Caco-2 (cell line): ENCODE measurements at regions of chr2 and their contacts with region 1.

Region 1: GRCh38 chr2:237026981-237027711 is 58.5 kb upstream of the COPS8 start:
- DNase-seq: peak; percentile 65 to 69
- H3K4me3 ChIP-seq: no peak overlapping the region
- H3K4me3 Mint-ChIP-seq: no peak overlapping the region
- H3K27ac Mint-ChIP-seq: no peak overlapping the region
- H3K4me1 ChIP-seq: peaks cover 19% of the 10 kb centered on the region
- H3K4me1 Mint-ChIP-seq: no peaks in the 10 kb centered on the region
- H3K27me3 ChIP-seq: no peaks in the 10 kb centered on the region
- H3K27me3 Mint-ChIP-seq: no peaks in the 10 kb centered on the region
- CTCF ChIP-seq: peak; percentile 71 to 75

Region 2: GRCh38 chr2:236569573-236569973 is 457.6 kb before region 1 on chr2 and contains the start of gene ACKR3:
- CTCF ChIA-PET with region 1: interaction called, 3 read pairs
- POLR2A ChIA-PET with region 1: no interaction called
- intact Hi-C with region 1: loop called (anchors 5 kb)
- DNase-seq: peak; percentile 66 to 67
- H3K4me3 ChIP-seq: peak within 1 kb of the TSS; percentile 40
- H3K4me3 Mint-ChIP-seq: peak within 1 kb of the TSS; percentile 75
- H3K27ac Mint-ChIP-seq: no peak within 1 kb of the TSS
- H3K4me1 ChIP-seq: peaks cover 20% of the 10 kb centered on the region; the same call in 1 of the 2 replicates
- H3K4me1 Mint-ChIP-seq: no peaks in the 10 kb centered on the region
- H3K27me3 ChIP-seq: no peaks in the 10 kb centered on the region
- H3K27me3 Mint-ChIP-seq: no peaks in the 10 kb centered on the region
- CTCF ChIP-seq: peak in 1 of 2 experiments; percentile 47
- total RNA-seq, gene ACKR3: 3.2 and 3.9 TPM in 2 replicates

Region 3: DNA sequence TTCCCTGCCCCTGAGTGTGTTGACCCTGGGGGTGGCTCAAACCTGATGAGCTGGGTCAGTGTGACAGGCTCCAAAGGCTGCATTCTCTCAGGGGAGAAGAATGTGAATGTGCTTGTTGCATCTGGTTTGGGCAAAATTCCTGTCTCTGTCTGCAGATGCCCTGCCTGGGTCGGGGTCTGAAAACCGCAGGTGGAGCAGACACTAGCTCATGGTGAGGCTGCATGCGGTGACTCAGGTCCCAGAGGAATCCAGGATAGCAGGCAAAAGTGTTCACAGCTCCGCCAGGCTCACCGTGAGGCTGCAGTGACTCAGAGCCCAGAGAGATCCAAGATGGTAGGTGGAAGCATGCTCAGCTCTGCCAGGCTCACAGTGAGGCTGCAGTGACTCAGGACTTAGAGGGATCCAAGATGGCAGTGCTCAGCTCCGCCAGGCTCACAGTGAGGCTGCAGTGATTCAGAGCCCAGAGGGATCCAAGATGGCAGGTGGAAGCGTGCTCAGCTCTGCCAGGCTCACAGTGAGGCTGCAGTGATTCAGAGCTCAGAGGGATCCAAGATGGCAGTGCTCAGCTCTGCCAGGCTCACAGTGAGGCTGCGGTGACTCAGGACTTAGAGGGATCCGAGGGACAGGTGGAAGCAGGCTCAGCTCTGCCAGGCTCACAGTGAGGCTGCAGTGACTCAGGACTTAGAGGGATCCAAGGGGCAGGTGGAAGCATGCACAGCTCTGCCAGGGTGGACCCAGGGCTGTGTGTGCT is 257.1 kb before region 1 on chr2:
- CTCF ChIA-PET with region 1: no interaction called
- POLR2A ChIA-PET with region 1: no interaction called
- intact Hi-C with region 1: loop called (anchors 5 kb)
- DNase-seq: peak; percentile 25 to 43
- H3K4me3 ChIP-seq: no peak overlapping the region
- H3K4me3 Mint-ChIP-seq: peak overlapping the region; percentile 9
- H3K27ac Mint-ChIP-seq: peak overlapping the region; percentile 56
- H3K4me1 ChIP-seq: no peaks in the 10 kb centered on the region
- H3K4me1 Mint-ChIP-seq: peaks cover 6% of the 10 kb centered on the region
- H3K27me3 ChIP-seq: no peaks in the 10 kb centered on the region
- H3K27me3 Mint-ChIP-seq: no peaks in the 10 kb centered on the region
- CTCF ChIP-seq: no peak

Region 4: GRCh38 chr2:236899950-236900640 is 127.1 kb before region 1 on chr2:
- CTCF ChIA-PET with region 1: no interaction called
- POLR2A ChIA-PET with region 1: no interaction called
- intact Hi-C with region 1: loop called (anchors 5 kb)
- DNase-seq: no peak
- H3K4me3 ChIP-seq: no peak overlapping the region
- H3K4me3 Mint-ChIP-seq: no peak overlapping the region
- H3K27ac Mint-ChIP-seq: no peak overlapping the region
- H3K4me1 ChIP-seq: no peaks in the 10 kb centered on the region
- H3K4me1 Mint-ChIP-seq: peaks cover 5% of the 10 kb centered on the region
- H3K27me3 ChIP-seq: no peaks in the 10 kb centered on the region
- H3K27me3 Mint-ChIP-seq: no peaks in the 10 kb centered on the region
- CTCF ChIP-seq: no peak

Region 5: DNA sequence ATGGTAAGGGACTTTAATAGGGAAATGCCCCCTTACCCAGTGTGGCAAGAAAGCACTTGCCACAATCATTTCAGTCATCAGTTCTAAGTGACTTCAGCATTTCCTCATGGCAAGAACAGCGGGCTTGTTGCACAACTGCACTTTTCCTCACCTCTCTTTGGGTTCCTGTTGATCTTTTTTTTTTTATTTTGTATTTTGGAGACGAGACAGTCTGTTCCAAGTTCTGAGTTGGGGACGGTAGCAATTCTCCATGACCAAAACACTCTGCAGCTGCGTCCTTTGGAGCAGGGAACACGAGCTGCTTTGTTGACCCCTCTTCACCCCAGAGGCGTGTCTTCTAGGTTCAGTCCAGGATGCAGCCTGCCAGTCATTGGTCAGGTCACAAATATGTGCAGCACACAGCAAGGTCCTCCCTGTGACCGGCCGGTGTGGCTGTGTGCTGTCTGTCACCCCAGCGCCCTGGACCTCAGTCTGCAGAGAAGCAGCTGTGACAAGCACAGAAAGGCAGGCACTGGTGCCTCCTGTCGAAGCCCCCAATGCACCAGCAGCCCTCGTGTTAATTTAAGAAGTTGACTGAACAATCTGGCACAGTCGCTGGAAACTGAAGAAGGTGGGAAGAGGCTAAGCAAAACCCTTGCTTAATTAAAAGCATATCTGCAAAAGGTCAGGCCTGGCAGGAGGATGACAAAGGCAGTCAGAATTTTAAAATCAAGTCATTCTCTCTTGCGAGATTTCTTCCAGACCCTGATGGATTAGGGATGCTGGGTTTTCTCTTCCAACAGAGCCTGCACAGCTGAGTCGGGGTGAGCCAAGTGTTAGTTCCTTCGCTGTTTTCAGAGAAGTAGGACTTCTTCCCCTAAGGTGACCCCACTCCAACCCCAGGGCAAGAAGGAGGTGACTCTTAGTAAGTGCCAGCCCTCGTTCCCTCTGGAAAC is 38.2 kb before region 1 on chr2:
- CTCF ChIA-PET with region 1: no interaction called
- POLR2A ChIA-PET with region 1: no interaction called
- intact Hi-C with region 1: loop called (anchors 2 kb)
- DNase-seq: peak; percentile 10 to 41
- H3K4me3 ChIP-seq: no peak overlapping the region
- H3K4me3 Mint-ChIP-seq: no peak overlapping the region
- H3K27ac Mint-ChIP-seq: peak overlapping the region; percentile 35
- H3K4me1 ChIP-seq: peaks cover 7% of the 10 kb centered on the region; the same call in 1 of the 2 replicates
- H3K4me1 Mint-ChIP-seq: peaks cover 13% of the 10 kb centered on the region
- H3K27me3 ChIP-seq: no peaks in the 10 kb centered on the region
- H3K27me3 Mint-ChIP-seq: no peaks in the 10 kb centered on the region
- CTCF ChIP-seq: no peak